Common myeloid progenitor, CD34-positive (primary cell): ENCODE measurements at regions of chr17 and their contacts with region 1.

Region 1: GRCh38 chr17:66567234-66568170 is 265.1 kb downstream of the PRKCA start:
- DNase-seq: peak; percentile 62 to 74 (median 68)
- H3K4me3 ChIP-seq: no peak overlapping the region
- H3K27ac ChIP-seq: no peak overlapping the region
- H3K4me1 ChIP-seq: no peaks in the 10 kb centered on the region
- H3K27me3 ChIP-seq: no peaks in the 10 kb centered on the region

Region 2: GRCh38 chr17:66255112-66255511 is 312.4 kb before region 1 on chr17:
- CTCF ChIA-PET with region 1: interaction called, 21 read pairs
- POLR2A ChIA-PET with region 1: no interaction called
- DNase-seq: peak; percentile 68 to 87 (median 86)
- H3K4me3 ChIP-seq: no peak overlapping the region
- H3K27ac ChIP-seq: no peak overlapping the region
- H3K4me1 ChIP-seq: no peaks in the 10 kb centered on the region
- H3K27me3 ChIP-seq: peaks cover 0 to 6% (median 3%) of the 10 kb centered on the region in 5 experiments

Region 3: GRCh38 chr17:66415366-66416206 is 151.9 kb before region 1 on chr17:
- CTCF ChIA-PET with region 1: no interaction called
- POLR2A ChIA-PET with region 1: no interaction called
- DNase-seq: no peak
- H3K4me3 ChIP-seq: no peak overlapping the region
- H3K27ac ChIP-seq: no peak overlapping the region
- H3K4me1 ChIP-seq: no peaks in the 10 kb centered on the region
- H3K27me3 ChIP-seq: peaks cover 0 to 2% (median 0%) of the 10 kb centered on the region in 5 experiments

Region 4: GRCh38 chr17:66496306-66496705 is 71.2 kb before region 1 on chr17:
- CTCF ChIA-PET with region 1: no interaction called
- POLR2A ChIA-PET with region 1: no interaction called
- DNase-seq: no peak
- H3K4me3 ChIP-seq: no peak overlapping the region
- H3K27ac ChIP-seq: no peak overlapping the region
- H3K4me1 ChIP-seq: peaks cover 0 to 5% (median 0%) of the 10 kb centered on the region in 4 experiments
- H3K27me3 ChIP-seq: no peaks in the 10 kb centered on the region

Region 5: GRCh38 chr17:66593116-66593515 is 25.6 kb after region 1 on chr17:
- CTCF ChIA-PET with region 1: no interaction called
- POLR2A ChIA-PET with region 1: no interaction called
- DNase-seq: no peak
- H3K4me3 ChIP-seq: no peak overlapping the region
- H3K27ac ChIP-seq: no peak overlapping the region
- H3K4me1 ChIP-seq: no peaks in the 10 kb centered on the region
- H3K27me3 ChIP-seq: no peaks in the 10 kb centered on the region